CD8-positive, alpha-beta T cell (primary cell): ENCODE measurements at regions of chr1 and their contacts with region 1.

Region 1: DNA sequence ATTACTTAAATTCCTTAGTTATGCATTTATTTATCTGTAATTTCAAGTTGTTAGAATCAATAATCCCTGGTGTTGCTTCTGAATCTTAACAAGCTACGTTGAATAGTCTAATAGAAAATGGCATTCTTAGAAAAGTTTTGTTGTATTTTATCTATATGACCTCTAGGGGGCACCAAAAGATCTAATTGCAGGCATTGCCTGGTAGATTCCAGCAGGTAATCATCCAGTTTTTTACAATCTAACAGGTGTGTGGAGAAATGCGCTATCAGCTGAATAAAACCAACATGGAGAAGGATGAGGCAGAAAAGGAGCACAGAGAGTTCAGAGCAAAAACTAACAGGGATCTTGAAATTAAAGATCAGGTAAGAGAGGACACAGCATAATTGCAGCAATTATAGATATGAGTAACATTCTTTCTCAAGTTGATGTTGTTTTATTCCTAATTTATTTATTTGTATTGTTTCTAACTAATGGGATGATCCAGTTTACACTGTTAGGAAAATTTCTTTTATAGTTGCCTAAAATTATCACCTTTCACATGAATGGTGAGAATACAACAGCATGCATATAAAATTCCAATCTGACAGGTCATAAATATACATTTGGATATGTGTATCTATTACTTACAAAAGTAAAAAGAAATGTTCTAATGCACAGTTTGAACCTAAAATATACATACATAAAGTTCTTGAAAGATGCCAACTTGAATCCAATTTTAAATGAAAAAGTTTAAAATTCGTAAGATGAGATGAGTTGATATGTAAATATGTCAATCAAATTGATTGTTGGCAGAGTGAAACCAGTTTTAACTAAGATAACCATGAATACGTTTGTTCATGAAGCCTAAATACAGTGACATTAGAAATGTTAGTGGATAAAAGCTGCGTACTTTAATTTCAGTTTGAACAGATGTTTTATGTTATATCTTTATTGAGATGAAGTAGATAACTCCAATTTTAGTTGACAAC is 88.4 kb downstream of the SDCCAG8 start:
- DNase-seq: peak in 2 of 9 experiments; percentile 47 to 66
- ATAC-seq: peak; percentile 49
- H3K4me3 ChIP-seq: no peak overlapping the region
- H3K4me3 Mint-ChIP-seq: no peak overlapping the region
- H3K27ac ChIP-seq: no peak overlapping the region
- H3K27ac Mint-ChIP-seq: no peak overlapping the region
- H3K4me1 ChIP-seq: no peaks in the 10 kb centered on the region
- H3K4me1 Mint-ChIP-seq: no peaks in the 10 kb centered on the region
- H3K27me3 ChIP-seq: no peaks in the 10 kb centered on the region
- H3K27me3 Mint-ChIP-seq: no peaks in the 10 kb centered on the region
- CTCF ChIP-seq: peak; percentile 90

Region 2: DNA sequence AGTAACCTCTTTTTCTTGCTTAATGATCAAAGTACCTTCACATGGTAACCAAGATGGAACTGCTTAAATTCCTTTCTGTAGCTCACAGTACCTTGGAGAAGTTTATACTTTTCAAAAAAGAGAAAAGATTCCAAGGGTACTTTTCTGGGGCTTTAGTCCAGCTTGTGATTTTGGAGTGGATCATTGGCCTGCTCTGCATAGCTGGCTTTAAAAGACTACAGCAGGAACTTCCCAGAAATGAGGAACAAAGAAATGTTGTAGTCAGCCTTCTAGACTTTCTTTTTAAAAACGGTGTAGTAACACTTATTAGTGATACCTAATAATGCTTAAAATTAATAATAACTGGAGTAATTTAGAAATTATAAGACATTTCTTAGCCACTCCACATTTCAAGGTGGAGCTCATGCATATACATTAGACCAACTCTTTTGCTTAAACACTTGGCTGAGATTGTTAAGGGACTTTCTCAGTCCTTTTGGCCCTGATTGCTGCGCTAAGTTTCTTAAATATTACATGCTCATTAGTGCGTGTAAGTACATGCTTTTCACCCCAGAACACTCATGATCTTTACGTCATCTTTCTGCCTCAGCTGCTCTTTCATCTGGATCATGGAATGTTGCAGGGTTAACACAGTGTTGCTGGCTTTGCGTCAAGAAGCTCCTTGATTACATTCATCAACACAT is 31.2 kb before region 1 on chr1:
- CTCF ChIA-PET with region 1: no interaction called
- POLR2A ChIA-PET with region 1: no interaction called
- intact Hi-C with region 1: no loop called
- DNase-seq: no peak
- ATAC-seq: no peak
- H3K4me3 ChIP-seq: no peak overlapping the region
- H3K4me3 Mint-ChIP-seq: no peak overlapping the region
- H3K27ac ChIP-seq: no peak overlapping the region
- H3K27ac Mint-ChIP-seq: no peak overlapping the region
- H3K4me1 ChIP-seq: no peaks in the 10 kb centered on the region
- H3K4me1 Mint-ChIP-seq: no peaks in the 10 kb centered on the region
- H3K27me3 ChIP-seq: no peaks in the 10 kb centered on the region
- H3K27me3 Mint-ChIP-seq: no peaks in the 10 kb centered on the region
- CTCF ChIP-seq: no peak

Region 3: DNA sequence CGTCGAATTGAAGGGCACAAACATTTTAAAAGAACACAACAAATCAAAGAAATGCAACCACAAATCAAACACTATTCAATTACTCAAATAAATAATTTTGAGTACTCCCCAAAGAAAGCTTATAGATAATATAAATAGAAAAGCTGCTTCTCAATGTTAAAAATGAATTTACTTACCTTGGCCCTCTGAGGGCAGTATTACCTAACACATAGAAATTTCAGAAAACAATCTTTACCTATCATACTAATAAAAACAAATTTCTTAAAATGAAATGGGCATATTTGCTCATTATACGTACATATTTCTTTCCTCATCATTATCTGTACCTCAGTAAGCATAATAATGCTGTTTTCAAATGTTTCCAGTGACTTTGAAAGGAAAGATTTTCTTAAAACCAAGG is 364.0 kb after region 1 on chr1:
- CTCF ChIA-PET with region 1: no interaction called
- POLR2A ChIA-PET with region 1: no interaction called
- intact Hi-C with region 1: loop called in 1 of 2 experiments (anchors 10 kb)
- DNase-seq: peak in 2 of 9 experiments; percentile 18 to 36
- ATAC-seq: no peak
- H3K4me3 ChIP-seq: no peak overlapping the region
- H3K4me3 Mint-ChIP-seq: no peak overlapping the region
- H3K27ac ChIP-seq: no peak overlapping the region
- H3K27ac Mint-ChIP-seq: no peak overlapping the region
- H3K4me1 ChIP-seq: no peaks in the 10 kb centered on the region
- H3K4me1 Mint-ChIP-seq: peaks cover 23% of the 10 kb centered on the region
- H3K27me3 ChIP-seq: no peaks in the 10 kb centered on the region
- H3K27me3 Mint-ChIP-seq: no peaks in the 10 kb centered on the region
- CTCF ChIP-seq: peak; percentile 60

Region 4: DNA sequence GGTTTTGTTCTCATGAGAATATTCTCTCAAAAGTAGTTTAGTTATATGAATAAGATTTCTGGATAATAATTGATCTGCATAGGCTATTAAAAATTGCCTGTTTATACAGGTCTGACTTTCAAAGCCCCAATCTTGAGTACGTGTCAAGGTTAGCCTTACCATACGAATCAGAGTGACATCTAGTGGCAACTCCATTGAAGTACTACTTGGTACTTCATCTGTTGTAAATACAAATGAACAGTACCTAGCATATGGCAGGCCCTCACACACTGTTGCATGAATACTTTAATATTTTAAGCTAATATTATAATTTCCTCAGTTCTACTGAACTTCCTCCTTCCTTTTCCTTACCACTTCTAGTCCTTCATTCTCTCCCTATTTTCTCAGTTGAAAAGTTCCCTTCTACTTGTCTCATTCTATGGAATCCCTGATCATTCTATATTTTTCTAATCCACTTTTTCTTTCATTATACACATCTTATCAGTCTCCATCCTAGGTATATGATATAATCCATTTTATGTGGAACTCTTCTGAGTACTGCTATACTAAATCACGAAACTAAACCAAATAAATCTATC is 404.5 kb after region 1 on chr1:
- CTCF ChIA-PET with region 1: interaction called, 5 read pairs
- POLR2A ChIA-PET with region 1: no interaction called
- intact Hi-C with region 1: loop called (anchors 1 kb)
- DNase-seq: peak in 3 of 9 experiments; percentile 29 to 79 (median 72)
- ATAC-seq: peak; percentile 99
- H3K4me3 ChIP-seq: no peak overlapping the region
- H3K4me3 Mint-ChIP-seq: no peak overlapping the region
- H3K27ac ChIP-seq: no peak overlapping the region
- H3K27ac Mint-ChIP-seq: no peak overlapping the region
- H3K4me1 ChIP-seq: peaks cover 8% of the 10 kb centered on the region
- H3K4me1 Mint-ChIP-seq: peaks cover 32% of the 10 kb centered on the region
- H3K27me3 ChIP-seq: no peaks in the 10 kb centered on the region
- H3K27me3 Mint-ChIP-seq: no peaks in the 10 kb centered on the region
- CTCF ChIP-seq: peak; percentile 93

Region 5: GRCh38 chr1:243946946-243947345 is 602.7 kb after region 1 on chr1:
- CTCF ChIA-PET with region 1: interaction called, 5 read pairs
- POLR2A ChIA-PET with region 1: no interaction called
- intact Hi-C with region 1: loop called (anchors 1 to 2 kb)
- DNase-seq: peak in 8 of 9 experiments; percentile 5 to 63 (median 42)
- ATAC-seq: peak; percentile 67
- H3K4me3 ChIP-seq: no peak overlapping the region
- H3K4me3 Mint-ChIP-seq: no peak overlapping the region
- H3K27ac ChIP-seq: no peak overlapping the region
- H3K27ac Mint-ChIP-seq: no peak overlapping the region
- H3K4me1 ChIP-seq: no peaks in the 10 kb centered on the region
- H3K4me1 Mint-ChIP-seq: no peaks in the 10 kb centered on the region
- H3K27me3 ChIP-seq: no peaks in the 10 kb centered on the region
- H3K27me3 Mint-ChIP-seq: peaks cover under 1% of the 10 kb centered on the region
- CTCF ChIP-seq: peak; percentile 60

Region 6: GRCh38 chr1:244302889-244303613 is 958.8 kb after region 1 on chr1:
- CTCF ChIA-PET with region 1: interaction called, 9 read pairs
- POLR2A ChIA-PET with region 1: no interaction called
- intact Hi-C with region 1: loop called in 1 of 2 experiments (anchors 1 kb)
- DNase-seq: no peak
- ATAC-seq: no peak
- H3K4me3 ChIP-seq: no peak overlapping the region
- H3K4me3 Mint-ChIP-seq: no peak overlapping the region
- H3K27ac ChIP-seq: no peak overlapping the region
- H3K27ac Mint-ChIP-seq: no peak overlapping the region
- H3K4me1 ChIP-seq: peaks cover 4% of the 10 kb centered on the region
- H3K4me1 Mint-ChIP-seq: peaks cover 8% of the 10 kb centered on the region
- H3K27me3 ChIP-seq: no peaks in the 10 kb centered on the region
- H3K27me3 Mint-ChIP-seq: no peaks in the 10 kb centered on the region
- CTCF ChIP-seq: no peak